OCI-LY7 (cell line): ENCODE measurements at regions of chr20 and their contacts with region 1.

Region 1: DNA sequence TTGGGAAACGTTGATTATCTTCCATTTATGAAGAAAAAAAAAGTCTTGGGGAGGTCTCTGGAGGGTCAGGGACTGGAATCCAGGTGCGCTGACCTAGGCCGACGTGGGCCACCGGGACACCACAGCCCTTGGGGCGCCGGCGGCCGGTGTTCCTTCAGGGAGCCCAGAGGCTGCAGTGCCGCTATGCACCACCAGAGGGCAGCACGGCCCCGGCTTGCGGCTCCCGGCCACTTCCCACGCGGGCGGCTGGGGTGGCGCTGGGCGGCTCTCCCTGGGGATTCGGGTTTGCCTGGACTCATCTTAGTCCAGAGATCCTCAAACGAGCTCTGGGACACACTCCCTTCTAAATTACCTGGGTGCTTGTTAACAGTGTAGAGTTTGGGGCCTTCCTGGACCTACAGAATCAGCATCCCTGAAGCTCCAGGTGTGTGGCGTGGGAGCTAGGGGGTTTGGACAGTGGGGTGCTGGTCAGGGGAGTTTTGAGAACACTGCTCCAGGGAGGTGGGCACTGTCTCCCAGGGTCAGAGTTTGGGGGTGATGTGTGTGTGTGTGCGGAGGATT is 23.0 kb upstream of the GTSF1L start:
- DNase-seq: peak; percentile 73
- H3K4me3 ChIP-seq: no peak overlapping the region
- H3K27ac ChIP-seq: no peak overlapping the region
- H3K4me1 ChIP-seq: peaks cover 51% of the 10 kb centered on the region
- CTCF ChIP-seq: peak; percentile 98

Region 2: DNA sequence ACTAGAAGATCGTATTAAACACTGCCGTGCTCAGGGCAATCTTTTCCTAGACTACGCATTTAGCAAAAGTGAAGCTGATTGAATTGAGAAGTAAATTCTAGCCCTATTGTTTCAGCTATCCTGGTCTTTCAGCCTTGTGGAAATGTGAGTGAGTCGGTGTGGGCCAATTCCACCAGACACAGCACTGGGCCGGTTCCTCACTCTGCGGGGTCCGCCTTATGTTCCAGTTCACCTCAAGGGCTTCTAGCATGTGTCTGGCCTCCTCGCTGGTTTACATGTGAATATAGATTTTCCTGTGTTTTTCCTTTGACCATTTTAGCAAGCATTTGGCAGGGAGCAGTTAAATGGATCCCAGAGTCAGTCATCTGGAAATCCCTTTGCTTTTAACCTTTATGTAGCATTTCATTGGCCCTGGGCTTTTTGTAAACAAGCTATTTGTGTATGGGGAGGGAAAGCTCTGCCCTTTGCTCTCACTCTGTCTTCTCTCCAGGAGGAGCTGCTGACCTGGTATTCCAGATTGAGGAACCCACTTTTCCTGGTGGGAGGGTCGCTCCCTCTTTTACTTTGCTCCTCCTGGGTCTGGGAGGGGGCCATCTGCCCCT is 10.6 kb before region 1 on chr20:
- CTCF ChIA-PET with region 1: no interaction called
- POLR2A ChIA-PET with region 1: no interaction called
- intact Hi-C with region 1: no loop called
- DNase-seq: no peak
- H3K4me3 ChIP-seq: no peak overlapping the region
- H3K27ac ChIP-seq: no peak overlapping the region
- H3K4me1 ChIP-seq: peaks cover 29% of the 10 kb centered on the region
- CTCF ChIP-seq: no peak

Region 3: GRCh38 chr20:43840382-43841070 is 90.7 kb after region 1 on chr20:
- CTCF ChIA-PET with region 1: interaction called, 5 read pairs
- POLR2A ChIA-PET with region 1: no interaction called
- intact Hi-C with region 1: loop called (anchors 1 kb)
- DNase-seq: peak; percentile 60
- H3K4me3 ChIP-seq: no peak overlapping the region
- H3K27ac ChIP-seq: no peak overlapping the region
- H3K4me1 ChIP-seq: no peaks in the 10 kb centered on the region
- CTCF ChIP-seq: peak; percentile 76